Heart left ventricle (tissue), 16 donors: ENCODE measurements at regions of chr1 and their contacts with region 1.

Region 1: GRCh38 chr1:220748089-220748934 is at the start of gene MTARC2:
- DNase-seq: peak; percentile 87 to 90 (median 89)
- ATAC-seq: peak; percentile 97 to 98 (median 98)
- H3K4me3 ChIP-seq: peak within 1 kb of the TSS; percentile 53 to 100 (median 85)
- H3K27ac ChIP-seq: peak within 1 kb of the TSS; percentile 66 to 98 (median 92)
- H3K4me1 ChIP-seq: peaks cover 4 to 55% (median 36%) of the 10 kb centered on the region in 12 donors
- H3K27me3 ChIP-seq: peaks cover 0 to 4% (median 0%) of the 10 kb centered on the region in 9 donors
- CTCF ChIP-seq: no peak
- POLR2A ChIP-seq: peak in 1 of 2 donors; percentile 94
- total RNA-seq, gene MTARC2: 16.5 to 29.1 (median 24.2) TPM

Region 2: GRCh38 chr1:220272047-220272840 is 476.1 kb before region 1 on chr1 and contains the start of gene RAB3GAP2:
- intact Hi-C with region 1: loop called in 1 of 10 experiments (anchors 10 kb)
- DNase-seq: peak; percentile 96 to 98 (median 97)
- ATAC-seq: peak; percentile 95 to 99 (median 99)
- H3K4me3 ChIP-seq: peak within 1 kb of the TSS; percentile 65 to 97 (median 92)
- H3K27ac ChIP-seq: peak within 1 kb of the TSS; percentile 66 to 93 (median 88)
- H3K4me1 ChIP-seq: peaks cover 0 to 40% (median 16%) of the 10 kb centered on the region in 12 donors
- H3K27me3 ChIP-seq: peaks cover 0 to 1% (median 0%) of the 10 kb centered on the region in 9 donors
- CTCF ChIP-seq: peak in 1 of 12 donors; percentile 1
- POLR2A ChIP-seq: peak in 1 of 2 donors; percentile 63
- total RNA-seq, gene RAB3GAP2: 13.8 to 39.3 (median 28.9) TPM

Region 3: DNA sequence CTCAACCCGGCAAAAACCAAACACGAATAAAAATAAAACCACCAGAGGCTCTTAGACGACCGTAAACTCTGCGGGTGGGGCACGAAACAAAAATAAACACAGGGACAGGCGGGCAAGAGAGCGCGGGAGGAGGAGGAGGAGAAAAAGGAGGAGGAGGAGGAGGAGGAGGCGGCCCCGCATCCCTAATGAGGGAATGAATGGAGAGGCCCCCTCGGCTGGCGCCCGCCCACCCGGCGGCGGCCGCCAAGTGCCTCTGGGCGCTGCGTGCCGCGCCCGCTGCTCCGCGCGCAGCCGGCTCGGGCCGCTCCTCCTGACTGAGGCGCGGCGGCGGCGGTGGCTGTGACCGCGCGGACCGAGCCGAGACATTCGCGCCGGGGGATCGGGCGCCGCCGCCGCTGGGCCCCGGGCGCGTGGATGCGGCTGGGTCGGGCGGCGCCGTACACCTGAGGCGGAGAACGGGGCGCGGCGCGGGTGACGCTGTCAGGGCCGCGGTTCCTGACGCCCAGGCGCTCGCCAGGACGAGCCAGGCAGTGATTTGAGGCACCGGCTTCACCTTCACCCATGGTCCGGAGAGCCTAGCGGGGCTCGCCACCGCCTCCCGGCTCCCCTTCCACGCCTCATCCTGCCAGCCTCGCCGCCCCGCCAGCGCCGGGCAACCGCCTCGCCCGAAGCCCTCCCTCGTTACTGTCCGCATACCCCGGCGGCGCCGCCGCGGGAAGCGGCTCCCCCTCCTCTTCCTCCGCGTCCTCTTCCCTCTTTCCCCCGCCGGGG is 220.2 kb before region 1 on chr1 and contains the start of gene MARK1:
- intact Hi-C with region 1: loop called in 1 of 10 experiments (anchors 5 kb)
- DNase-seq: peak; percentile 83 to 90 (median 88)
- ATAC-seq: peak; percentile 92 to 96 (median 93)
- H3K4me3 ChIP-seq: peak within 1 kb of the TSS; percentile 73 to 95 (median 88)
- H3K27ac ChIP-seq: peak within 1 kb of the TSS; percentile 73 to 95 (median 88)
- H3K4me1 ChIP-seq: peaks cover 0 to 26% (median 6%) of the 10 kb centered on the region in 12 donors
- H3K27me3 ChIP-seq: peaks cover 0 to 56% (median 0%) of the 10 kb centered on the region in 9 donors
- CTCF ChIP-seq: no peak
- POLR2A ChIP-seq: peak in 1 of 2 donors; percentile 10
- total RNA-seq, gene MARK1: 12.1 to 25.1 (median 16.7) TPM

Region 4: DNA sequence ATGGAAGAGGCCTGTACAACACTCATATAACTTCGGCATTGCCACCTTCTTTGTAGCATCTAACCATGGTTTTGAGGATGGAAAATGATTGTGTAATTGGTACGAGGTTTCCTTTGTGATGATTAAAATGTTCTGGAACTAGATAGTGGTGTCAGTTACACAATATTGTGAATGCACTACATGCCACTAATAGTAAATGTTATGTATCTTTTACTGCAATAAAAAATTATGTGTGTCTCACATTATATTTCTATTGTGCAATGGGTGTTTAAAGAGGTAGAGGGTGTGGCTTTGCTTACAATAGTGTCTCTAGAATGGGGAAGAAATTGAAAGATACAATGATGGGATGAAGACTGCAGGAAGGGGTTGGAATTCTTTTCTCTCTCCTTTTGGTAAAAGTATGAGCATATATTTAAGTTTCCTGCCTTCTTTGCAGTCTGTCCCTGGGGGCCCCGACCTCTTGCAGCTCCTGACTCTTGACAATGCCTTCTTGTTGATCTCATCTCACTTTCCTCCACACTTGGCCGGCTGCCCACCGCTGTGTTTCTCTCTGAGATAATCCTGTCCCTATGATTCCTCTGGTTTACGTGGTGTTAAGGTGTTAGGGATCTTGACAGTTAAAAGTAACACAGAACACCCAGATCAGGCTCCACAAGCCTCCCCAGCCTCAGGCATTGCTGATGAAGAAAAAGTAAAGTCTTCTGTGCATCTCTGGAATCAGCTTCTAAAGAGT is 77.7 kb after region 1 on chr1:
- intact Hi-C with region 1: no loop called
- DNase-seq: peak in 1 of 5 donors; percentile 39
- ATAC-seq: no peak
- H3K4me3 ChIP-seq: no peak overlapping the region
- H3K27ac ChIP-seq: no peak overlapping the region
- H3K4me1 ChIP-seq: peaks cover 0 to 36% (median 12%) of the 10 kb centered on the region in 12 donors
- H3K27me3 ChIP-seq: no peaks in the 10 kb centered on the region
- CTCF ChIP-seq: no peak
- POLR2A ChIP-seq: no peak